Endothelial cell of umbilical vein (primary cell): ENCODE measurements at regions of chr10 and their contacts with region 1.

Region 1: DNA sequence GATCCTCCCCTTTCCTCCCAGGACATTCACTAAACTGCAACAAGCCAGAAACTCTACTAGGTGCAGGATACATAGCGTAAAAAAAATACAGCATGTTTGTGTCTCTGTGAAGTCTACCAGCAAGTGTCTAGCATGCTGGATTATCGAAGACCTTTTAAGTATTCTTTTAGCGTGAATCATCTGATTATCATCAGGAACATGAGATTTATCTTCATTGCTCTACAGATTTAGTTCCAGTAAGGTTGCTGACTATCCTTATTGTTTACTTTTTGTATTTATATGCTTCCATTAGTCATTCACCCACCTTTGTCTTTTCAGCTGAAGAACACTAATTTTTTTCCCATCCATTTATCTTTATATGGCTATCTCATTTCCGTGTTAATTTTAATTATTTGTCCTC is 62.8 kb downstream of the PDZD8 start:
- DNase-seq: no peak
- H3K4me3 ChIP-seq: no peak overlapping the region
- H3K27ac ChIP-seq: no peak overlapping the region
- H3K4me1 ChIP-seq: peaks cover 9% of the 10 kb centered on the region
- H3K27me3 ChIP-seq: no peaks in the 10 kb centered on the region
- CTCF ChIP-seq: no peak
- POLR2A ChIP-seq: no peak

Region 2: GRCh38 chr10:117271427-117271826 is 41.0 kb before region 1 on chr10:
- CTCF ChIA-PET with region 1: no interaction called
- POLR2A ChIA-PET with region 1: no interaction called
- dilution Hi-C with region 1: no loop called
- intact Hi-C with region 1: loop called (anchors 1 kb)
- DNase-seq: no peak
- H3K4me3 ChIP-seq: no peak overlapping the region
- H3K27ac ChIP-seq: no peak overlapping the region
- H3K4me1 ChIP-seq: no peaks in the 10 kb centered on the region
- H3K27me3 ChIP-seq: no peaks in the 10 kb centered on the region
- CTCF ChIP-seq: no peak
- POLR2A ChIP-seq: no peak

Region 3: GRCh38 chr10:117342641-117343040 is 30.2 kb after region 1 on chr10:
- CTCF ChIA-PET with region 1: no interaction called
- POLR2A ChIA-PET with region 1: no interaction called
- dilution Hi-C with region 1: no loop called
- intact Hi-C with region 1: no loop called
- DNase-seq: no peak
- H3K4me3 ChIP-seq: no peak overlapping the region
- H3K27ac ChIP-seq: no peak overlapping the region
- H3K4me1 ChIP-seq: no peaks in the 10 kb centered on the region
- H3K27me3 ChIP-seq: no peaks in the 10 kb centered on the region
- CTCF ChIP-seq: no peak
- POLR2A ChIP-seq: no peak